Activated T-helper 2 cell treated with anti-CD3 and anti-CD28 coated beads, Interferon-gamma antibody, Interleukin-2, Interleukin-4, amounts not matched to agents 10 μg/mL and 5 μg/mL and 100 μg/mL, durations not matched to agents 14 hours and 24 hours and 36 hours (primary cell): ENCODE measurements at regions of chr7 and their contacts with region 1.

Region 1: GRCh38 chr7:105876091-105876963 is at the start of gene ATXN7L1:
- DNase-seq: peak; percentile 81
- H3K4me3 Mint-ChIP-seq: peak within 1 kb of the TSS; percentile 93
- H3K27ac Mint-ChIP-seq: peak within 1 kb of the TSS; percentile 87
- H3K4me1 Mint-ChIP-seq: peaks cover 45% of the 10 kb centered on the region
- H3K27me3 Mint-ChIP-seq: peaks cover 18% of the 10 kb centered on the region
- total RNA-seq, gene ATXN7L1: 11.1 and 12.4 TPM in 2 replicates

Region 2: DNA sequence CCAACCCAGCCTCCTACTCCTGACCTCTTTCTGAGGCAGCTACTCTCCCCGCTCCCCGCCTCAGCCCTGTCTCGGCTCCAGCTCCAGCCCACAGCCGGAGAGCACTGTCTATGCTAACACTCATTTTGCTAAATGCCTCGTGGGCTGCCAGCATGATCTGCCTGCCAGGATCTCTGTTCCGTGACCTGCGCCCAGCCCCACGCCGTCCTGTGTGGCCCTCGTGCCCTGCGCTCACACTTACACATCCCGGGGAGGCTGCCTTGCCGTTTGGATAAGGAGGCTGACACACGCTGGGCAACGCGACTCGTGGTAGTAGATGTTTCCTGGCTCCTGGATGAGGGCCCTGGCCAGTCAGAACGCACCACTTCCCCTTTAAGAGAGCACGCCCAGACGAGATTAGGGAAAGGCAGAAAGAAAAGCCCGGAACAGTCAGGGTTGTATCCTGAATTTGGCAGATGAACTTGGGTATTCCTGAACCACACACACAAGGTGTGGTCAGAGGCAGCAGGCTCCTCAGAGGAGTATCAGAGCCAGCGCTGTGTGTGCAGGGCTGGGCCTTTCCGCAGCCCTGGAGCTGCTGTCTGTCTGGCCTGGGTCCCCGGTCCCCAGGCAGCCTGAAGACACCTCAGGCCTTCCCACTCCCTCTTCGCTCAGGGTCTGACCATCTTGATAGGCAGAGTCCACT is 197.4 kb before region 1 on chr7:
- intact Hi-C with region 1: loop called (anchors 5 kb)
- DNase-seq: peak; percentile 19
- H3K4me3 Mint-ChIP-seq: peak overlapping the region; percentile 89
- H3K27ac Mint-ChIP-seq: peak overlapping the region; percentile 94
- H3K4me1 Mint-ChIP-seq: peaks cover 57% of the 10 kb centered on the region
- H3K27me3 Mint-ChIP-seq: no peaks in the 10 kb centered on the region

Region 3: DNA sequence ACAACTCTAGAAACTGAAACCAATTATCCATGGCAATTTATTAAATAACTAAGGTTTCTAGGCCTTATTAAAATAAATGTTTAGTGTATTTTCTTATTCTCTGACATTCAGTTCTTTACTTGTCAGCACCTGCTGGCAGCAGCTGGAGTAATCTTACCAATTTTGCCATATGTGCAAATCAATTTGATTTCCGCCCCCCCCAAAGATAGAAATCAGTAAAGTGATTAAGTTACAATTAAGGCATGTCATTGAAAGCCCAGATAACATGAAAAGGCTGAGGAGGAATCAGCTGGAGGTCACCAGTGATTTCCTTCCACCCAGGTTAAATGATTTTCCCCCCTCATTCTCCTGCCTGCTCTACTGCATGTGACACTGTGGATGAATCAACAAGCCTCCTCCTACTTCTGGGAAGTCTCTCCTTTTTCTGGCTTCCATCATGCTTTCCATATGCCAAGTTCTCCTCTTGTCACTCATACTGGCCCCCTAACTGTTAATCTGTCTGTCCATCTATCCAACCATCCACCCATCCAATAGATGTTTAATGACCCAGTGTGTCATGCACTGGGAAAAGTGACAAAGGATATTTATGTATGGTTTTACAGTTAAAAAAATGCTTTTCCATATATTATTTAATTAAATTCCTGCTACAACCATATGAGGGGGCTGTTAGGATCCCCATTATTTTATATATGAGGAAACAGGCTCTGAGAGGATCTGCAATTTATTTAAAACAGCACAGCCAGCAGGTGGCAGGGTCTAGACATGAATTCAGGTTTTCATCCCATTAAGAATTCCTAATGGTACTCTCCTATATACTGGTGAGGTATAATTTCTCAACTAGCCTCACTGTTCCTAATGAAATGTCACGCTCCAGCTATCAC is 116.4 kb before region 1 on chr7:
- intact Hi-C with region 1: loop called (anchors 5 kb)
- DNase-seq: no peak
- H3K4me3 Mint-ChIP-seq: no peak overlapping the region
- H3K27ac Mint-ChIP-seq: no peak overlapping the region
- H3K4me1 Mint-ChIP-seq: peaks cover 31% of the 10 kb centered on the region
- H3K27me3 Mint-ChIP-seq: peaks cover 6% of the 10 kb centered on the region

Region 4: DNA sequence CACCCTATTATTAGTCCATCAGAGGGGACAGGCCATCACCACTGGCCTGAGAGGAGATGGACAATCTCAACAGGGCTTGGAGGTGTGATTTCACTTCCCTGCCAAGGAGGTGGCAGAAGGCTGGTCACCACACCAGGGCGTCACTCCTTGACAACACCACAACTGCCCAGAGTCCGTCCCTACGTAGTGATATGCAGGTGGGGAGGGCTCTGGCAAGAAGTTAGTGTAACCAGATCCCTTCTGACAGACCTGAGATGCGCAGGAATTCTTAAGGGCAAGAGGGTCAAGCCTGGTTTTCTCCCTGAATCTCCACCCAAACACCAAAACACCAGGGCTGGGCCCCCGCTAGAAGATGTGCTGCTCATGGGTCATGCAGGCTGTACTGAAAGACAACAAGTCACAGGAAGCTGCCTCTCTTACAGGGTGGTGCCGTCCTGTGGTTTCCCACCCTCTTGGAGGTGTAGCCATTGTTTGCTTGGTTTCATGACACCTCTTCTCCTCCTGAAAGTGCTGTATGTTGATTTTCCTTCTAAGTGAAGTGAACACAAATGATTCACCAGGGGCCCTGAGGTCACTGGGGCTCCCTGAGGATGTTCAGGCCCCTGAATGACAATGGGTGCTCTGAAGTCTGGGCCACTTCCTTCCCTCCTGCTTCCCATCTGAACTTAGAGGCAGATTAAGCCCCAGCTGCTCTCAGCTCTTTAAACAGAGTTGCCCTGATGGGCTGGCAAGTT is 27.0 kb before region 1 on chr7:
- intact Hi-C with region 1: loop called (anchors 1 kb)
- DNase-seq: peak; percentile 69
- H3K4me3 Mint-ChIP-seq: peak overlapping the region; percentile 37
- H3K27ac Mint-ChIP-seq: peak overlapping the region; percentile 75
- H3K4me1 Mint-ChIP-seq: peaks cover 58% of the 10 kb centered on the region
- H3K27me3 Mint-ChIP-seq: no peaks in the 10 kb centered on the region

Region 5: DNA sequence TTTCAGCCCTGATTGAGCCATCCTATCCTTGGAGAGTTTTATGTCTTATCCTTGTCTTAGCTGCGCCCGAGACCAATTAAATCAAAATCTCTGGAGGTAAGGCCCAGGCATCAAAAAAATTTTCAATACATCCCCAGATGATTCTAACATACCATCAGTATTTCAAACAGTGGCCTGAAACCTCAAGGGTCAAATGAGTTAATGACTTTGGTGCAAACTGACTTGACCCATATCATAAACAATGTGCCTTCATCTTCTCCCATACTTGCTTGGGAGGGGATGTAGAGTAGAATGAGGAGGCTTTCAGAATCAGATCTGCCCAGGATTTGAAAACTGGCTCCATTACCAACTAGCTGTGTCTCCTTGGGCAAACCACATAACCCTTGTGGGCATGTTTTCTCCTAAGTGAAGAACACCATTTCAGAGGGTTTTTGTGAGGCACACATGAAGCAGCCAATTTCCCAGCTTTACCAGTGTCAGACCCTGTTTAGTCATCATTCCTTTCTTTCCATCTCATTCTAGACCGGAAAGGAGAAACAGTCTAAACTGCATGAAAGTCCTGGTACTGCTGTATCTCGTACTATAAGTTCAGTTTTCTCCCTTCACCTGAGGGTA is 35.7 kb after region 1 on chr7:
- intact Hi-C with region 1: no loop called
- DNase-seq: no peak
- H3K4me3 Mint-ChIP-seq: no peak overlapping the region
- H3K27ac Mint-ChIP-seq: no peak overlapping the region
- H3K4me1 Mint-ChIP-seq: no peaks in the 10 kb centered on the region
- H3K27me3 Mint-ChIP-seq: peaks cover 7% of the 10 kb centered on the region

Region 6: DNA sequence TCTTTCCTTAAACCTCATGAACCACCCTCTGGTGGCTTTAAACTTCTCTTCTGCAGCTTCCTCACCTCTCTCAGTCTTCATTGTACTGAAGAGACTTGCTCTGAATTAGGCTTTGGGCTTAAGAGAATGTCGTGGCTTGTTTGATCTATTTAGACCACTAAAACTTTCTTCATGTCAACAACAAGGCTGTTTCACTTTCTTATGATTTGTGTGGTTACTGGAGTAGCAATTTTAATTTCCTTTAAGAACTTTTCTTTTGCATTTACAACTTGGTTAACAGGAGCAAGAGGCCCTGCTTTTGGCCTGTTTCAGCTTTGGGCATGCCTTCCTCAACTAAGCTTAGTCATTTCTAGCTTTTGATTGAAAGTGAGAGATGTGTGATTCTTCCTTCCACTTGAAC is 48.6 kb after region 1 on chr7:
- intact Hi-C with region 1: loop called (anchors 10 kb)
- DNase-seq: peak; percentile 32
- H3K4me3 Mint-ChIP-seq: no peak overlapping the region
- H3K27ac Mint-ChIP-seq: peak overlapping the region; percentile 4
- H3K4me1 Mint-ChIP-seq: peaks cover 19% of the 10 kb centered on the region
- H3K27me3 Mint-ChIP-seq: peaks cover 11% of the 10 kb centered on the region

Region 7: GRCh38 chr7:107168233-107169119 is 1292.1 kb after region 1 on chr7 and contains the start of gene HBP1:
- intact Hi-C with region 1: no loop called
- DNase-seq: peak; percentile 98
- H3K4me3 Mint-ChIP-seq: peak within 1 kb of the TSS; percentile 89
- H3K27ac Mint-ChIP-seq: peak within 1 kb of the TSS; percentile 96
- H3K4me1 Mint-ChIP-seq: peaks cover 36% of the 10 kb centered on the region
- H3K27me3 Mint-ChIP-seq: peaks cover 15% of the 10 kb centered on the region
- total RNA-seq, gene HBP1: 17.0 and 19.3 TPM in 2 replicates